CD14-positive monocyte (primary cell): ENCODE measurements at regions of chr2 and their contacts with region 1.

Region 1: GRCh38 chr2:160918906-160919503 is 241.2 kb upstream of the TANK start:
- DNase-seq: peak; percentile 38 to 59 (median 59)
- H3K4me3 ChIP-seq: no peak overlapping the region
- H3K4me3 Mint-ChIP-seq: no peak overlapping the region
- H3K27ac ChIP-seq: no peak overlapping the region
- H3K27ac Mint-ChIP-seq: no peak overlapping the region
- H3K4me1 ChIP-seq: no peaks in the 10 kb centered on the region
- H3K4me1 Mint-ChIP-seq: peaks cover 4% of the 10 kb centered on the region
- H3K27me3 ChIP-seq: no peaks in the 10 kb centered on the region
- H3K27me3 Mint-ChIP-seq: peaks cover 0 to 3% (median 1%) of the 10 kb centered on the region in 3 donors
- CTCF ChIP-seq: peak; percentile 84

Region 2: GRCh38 chr2:160429248-160430000 is 489.6 kb before region 1 on chr2:
- intact Hi-C with region 1: loop called in 1 of 2 experiments (anchors 10 kb)
- DNase-seq: peak; percentile 28 to 72 (median 50)
- H3K4me3 ChIP-seq: peak overlapping the region in 1 of 3 experiments; percentile 14
- H3K4me3 Mint-ChIP-seq: no peak overlapping the region
- H3K27ac ChIP-seq: no peak overlapping the region
- H3K27ac Mint-ChIP-seq: peak overlapping the region in 4 of 7 donors; percentile 31 to 82 (median 72)
- H3K4me1 ChIP-seq: peaks cover 15 to 19% of the 10 kb centered on the region in 2 donors
- H3K4me1 Mint-ChIP-seq: peaks cover 27% of the 10 kb centered on the region
- H3K27me3 ChIP-seq: no peaks in the 10 kb centered on the region
- H3K27me3 Mint-ChIP-seq: no peaks in the 10 kb centered on the region
- CTCF ChIP-seq: peak; percentile 82